ENCODE measurements at regions of chr12 and their contacts with region 1.

Region 1: GRCh38 chr12:122951979-122952892 is 14.0 kb downstream of the ABCB9 start:
- DNase-seq: peak; percentile 66 to 90 (median 78)
- ATAC-seq: peak; percentile 94 to 98 (median 96)
- H3K4me3 ChIP-seq: no peak overlapping the region
- H3K27ac ChIP-seq: no peak overlapping the region
- H3K4me1 ChIP-seq: no peaks in the 10 kb centered on the region
- H3K27me3 ChIP-seq: no peaks in the 10 kb centered on the region
- CTCF ChIP-seq: peak; percentile 61 to 88 (median 78)

Region 2: GRCh38 chr12:122788387-122788786 is 163.8 kb before region 1 on chr12:
- intact Hi-C with region 1: loop called in 2 of 3 experiments (anchors 10 kb)
- DNase-seq: no peak
- ATAC-seq: no peak
- H3K4me3 ChIP-seq: no peak overlapping the region
- H3K27ac ChIP-seq: no peak overlapping the region
- H3K4me1 ChIP-seq: no peaks in the 10 kb centered on the region
- H3K27me3 ChIP-seq: no peaks in the 10 kb centered on the region
- CTCF ChIP-seq: no peak

Region 3: GRCh38 chr12:122793685-122794106 is 158.5 kb before region 1 on chr12:
- intact Hi-C with region 1: loop called in 2 of 3 experiments (anchors 10 kb)
- DNase-seq: peak in 1 of 6 donors; percentile 25
- ATAC-seq: peak; percentile 78 to 86 (median 83)
- H3K4me3 ChIP-seq: no peak overlapping the region
- H3K27ac ChIP-seq: no peak overlapping the region
- H3K4me1 ChIP-seq: no peaks in the 10 kb centered on the region
- H3K27me3 ChIP-seq: no peaks in the 10 kb centered on the region
- CTCF ChIP-seq: peak; percentile 35 to 70 (median 64)

Region 4: GRCh38 chr12:122851820-122852219 is 100.4 kb before region 1 on chr12:
- intact Hi-C with region 1: loop called in 2 of 3 experiments (anchors 5 to 10 kb)
- DNase-seq: no peak
- ATAC-seq: no peak
- H3K4me3 ChIP-seq: no peak overlapping the region
- H3K27ac ChIP-seq: no peak overlapping the region
- H3K4me1 ChIP-seq: no peaks in the 10 kb centered on the region
- H3K27me3 ChIP-seq: no peaks in the 10 kb centered on the region
- CTCF ChIP-seq: no peak

Region 5: GRCh38 chr12:122860346-122861090 is 91.7 kb before region 1 on chr12:
- intact Hi-C with region 1: loop called (anchors 5 to 10 kb)
- DNase-seq: peak; percentile 85 to 96 (median 92)
- ATAC-seq: peak; percentile 73 to 84 (median 80)
- H3K4me3 ChIP-seq: no peak overlapping the region
- H3K27ac ChIP-seq: peak overlapping the region; percentile 31 to 69 (median 54)
- H3K4me1 ChIP-seq: peaks cover 8 to 17% (median 14%) of the 10 kb centered on the region in 3 donors
- H3K27me3 ChIP-seq: no peaks in the 10 kb centered on the region
- CTCF ChIP-seq: peak; percentile 86 to 93 (median 91)

Measured in pancreas (tissue), 10 donors.